ENCODE measurements at regions of chr2 and their contacts with region 1.

Region 1: DNA sequence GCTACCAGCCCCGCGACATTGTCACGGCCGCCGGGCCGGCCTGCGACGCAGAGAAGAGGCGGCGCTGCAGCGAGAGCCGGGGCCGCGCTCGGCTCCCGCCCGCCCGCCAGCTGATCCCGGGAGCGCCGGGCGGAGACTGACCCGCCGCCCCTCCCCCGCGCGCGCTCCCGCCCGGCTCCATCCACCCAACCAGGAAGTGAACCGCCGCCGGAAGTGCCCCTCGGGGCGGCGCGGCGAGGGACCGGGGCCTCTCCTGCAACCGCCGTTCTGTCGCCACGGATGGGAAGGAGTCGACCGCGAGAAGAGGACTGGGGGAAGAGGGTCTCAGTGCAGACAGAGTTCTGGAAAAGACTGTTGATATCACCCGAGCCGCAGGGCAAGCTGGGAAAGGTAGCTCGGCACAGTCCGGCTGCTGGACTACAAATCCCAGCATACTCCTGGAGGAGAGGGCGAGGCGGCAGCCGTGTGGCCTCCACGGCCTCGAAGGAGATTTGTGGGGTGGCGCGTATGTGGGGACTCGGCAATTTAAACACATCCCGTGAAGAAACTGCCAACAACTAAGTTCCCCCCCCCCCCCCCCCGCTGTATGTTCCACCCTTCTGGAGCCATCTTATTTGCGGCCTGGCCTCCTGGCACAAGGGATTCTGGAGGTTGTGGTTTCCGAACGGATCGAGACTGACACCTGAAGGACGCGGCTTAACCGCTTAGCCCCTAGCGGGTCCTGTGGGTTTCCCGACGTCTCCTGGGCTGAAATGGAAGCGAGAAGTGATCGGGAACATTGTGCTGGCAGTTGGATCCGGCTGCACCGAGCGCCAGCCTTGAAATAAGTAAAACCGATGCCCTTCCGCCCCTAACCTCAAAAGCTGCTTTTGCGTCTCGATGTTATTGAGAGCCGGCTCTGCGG is at the start of gene AAK1:
- DNase-seq: peak; percentile 79
- ATAC-seq: peak; percentile 85
- H3K4me3 ChIP-seq: peak within 1 kb of the TSS; percentile 90
- H3K27ac ChIP-seq: peak within 1 kb of the TSS; percentile 97
- H3K4me1 ChIP-seq: peaks cover 17% of the 10 kb centered on the region
- H3K27me3 ChIP-seq: no peaks in the 10 kb centered on the region
- CTCF ChIP-seq: no peak
- POLR2A ChIP-seq: peak; percentile 71
- RAD21 ChIP-seq: no peak
- total RNA-seq, gene AAK1: 26.5 and 34.7 TPM in 2 replicates

Region 2: DNA sequence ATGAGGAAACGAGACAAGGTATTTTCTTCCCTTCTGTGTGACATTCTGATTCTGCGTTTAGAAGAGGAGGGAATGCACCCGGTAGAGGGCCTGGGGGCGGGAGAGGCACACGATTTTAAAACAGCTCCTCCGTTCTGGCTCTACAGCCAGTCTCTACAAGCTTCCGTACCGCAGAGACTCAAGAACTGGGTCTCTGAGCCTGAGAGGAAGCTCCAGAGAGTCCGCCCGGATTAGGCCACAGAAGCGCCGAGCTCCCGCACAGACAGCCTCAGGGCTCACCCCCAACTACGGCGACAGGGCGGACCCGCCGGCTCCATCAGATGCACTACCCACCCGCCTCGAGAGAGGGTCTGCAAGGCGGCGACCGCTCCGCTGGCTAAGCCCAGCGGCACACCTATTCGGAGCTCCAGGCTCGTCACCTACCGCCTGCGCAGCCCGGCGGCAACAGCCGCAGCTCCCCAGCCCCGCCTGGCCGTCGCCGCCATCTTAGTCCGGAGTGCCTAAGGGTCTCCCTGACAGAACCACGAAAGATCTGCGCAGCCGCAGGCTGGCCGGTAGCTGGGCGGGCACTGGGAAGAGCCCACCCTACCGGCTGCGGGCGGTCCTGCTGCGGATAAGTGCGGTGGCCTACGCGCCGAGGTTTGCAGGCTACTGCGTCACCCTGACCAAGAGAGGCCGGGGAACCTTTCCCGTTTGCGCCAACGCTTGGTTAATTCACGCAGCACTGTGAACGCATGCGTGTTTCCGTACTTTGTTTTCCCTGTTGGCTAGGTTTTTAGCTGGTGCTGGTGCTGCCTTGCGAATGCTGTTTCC is 206.7 kb before region 1 on chr2 and contains the start of gene NFU1:
- CTCF ChIA-PET with region 1: no interaction called
- POLR2A ChIA-PET with region 1: no interaction called
- dilution Hi-C with region 1: no loop called
- in situ Hi-C with region 1: no loop called
- intact Hi-C with region 1: loop called (anchors 2 kb)
- DNase-seq: peak; percentile 97
- ATAC-seq: peak; percentile 99
- H3K4me3 ChIP-seq: peak within 1 kb of the TSS; percentile 59
- H3K27ac ChIP-seq: peak within 1 kb of the TSS; percentile 83
- H3K4me1 ChIP-seq: peaks cover 4% of the 10 kb centered on the region
- H3K27me3 ChIP-seq: no peaks in the 10 kb centered on the region
- CTCF ChIP-seq: peak; percentile 74
- POLR2A ChIP-seq: peak; percentile 88
- RAD21 ChIP-seq: peak; percentile 36
- total RNA-seq, gene NFU1: 24.0 and 40.0 TPM in 2 replicates

Region 3: DNA sequence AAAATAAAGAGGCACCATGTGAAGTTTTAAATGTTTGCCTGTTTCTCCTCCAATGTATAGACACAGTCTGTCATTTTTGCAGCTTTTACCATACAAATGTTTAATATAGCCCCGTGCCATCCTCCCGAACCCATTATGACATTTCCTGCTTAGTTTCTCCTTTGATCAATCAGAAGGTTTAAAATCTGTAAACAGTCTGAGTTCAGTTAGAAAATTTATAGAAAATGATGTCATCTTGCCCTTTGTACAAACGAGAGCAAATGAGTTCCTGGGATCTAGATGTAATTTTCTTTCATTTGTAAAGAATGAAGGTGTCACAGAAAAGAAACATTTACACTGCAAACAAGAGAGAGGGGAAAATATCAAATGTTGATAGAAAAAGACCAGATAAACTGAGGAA is 143.9 kb before region 1 on chr2:
- CTCF ChIA-PET with region 1: no interaction called
- POLR2A ChIA-PET with region 1: no interaction called
- dilution Hi-C with region 1: no loop called
- in situ Hi-C with region 1: no loop called
- intact Hi-C with region 1: loop called (anchors 5 kb)
- DNase-seq: peak; percentile 21
- ATAC-seq: peak; percentile 21; the same call in 1 of the 2 replicates
- H3K4me3 ChIP-seq: no peak overlapping the region
- H3K27ac ChIP-seq: no peak overlapping the region; the same call in 1 of the 2 replicates
- H3K4me1 ChIP-seq: 0 out of 2 replicates have a peak, but pooled peaks cover 2% of the 10 kb centered on the region
- H3K27me3 ChIP-seq: no peaks in the 10 kb centered on the region
- CTCF ChIP-seq: no peak
- POLR2A ChIP-seq: no peak
- RAD21 ChIP-seq: no peak

Region 4: GRCh38 chr2:69565431-69565839 is 78.4 kb before region 1 on chr2:
- CTCF ChIA-PET with region 1: interaction called, 3 read pairs
- POLR2A ChIA-PET with region 1: interaction called, 3 read pairs
- dilution Hi-C with region 1: no loop called
- in situ Hi-C with region 1: no loop called
- intact Hi-C with region 1: loop called (anchors 5 kb)
- DNase-seq: no peak
- ATAC-seq: no peak
- H3K4me3 ChIP-seq: no peak overlapping the region
- H3K27ac ChIP-seq: no peak overlapping the region
- H3K4me1 ChIP-seq: peaks cover 30% of the 10 kb centered on the region
- H3K27me3 ChIP-seq: no peaks in the 10 kb centered on the region
- CTCF ChIP-seq: peak; percentile 47
- POLR2A ChIP-seq: no peak
- RAD21 ChIP-seq: peak; percentile 18; the same call in 1 of the 2 replicates

Region 5: DNA sequence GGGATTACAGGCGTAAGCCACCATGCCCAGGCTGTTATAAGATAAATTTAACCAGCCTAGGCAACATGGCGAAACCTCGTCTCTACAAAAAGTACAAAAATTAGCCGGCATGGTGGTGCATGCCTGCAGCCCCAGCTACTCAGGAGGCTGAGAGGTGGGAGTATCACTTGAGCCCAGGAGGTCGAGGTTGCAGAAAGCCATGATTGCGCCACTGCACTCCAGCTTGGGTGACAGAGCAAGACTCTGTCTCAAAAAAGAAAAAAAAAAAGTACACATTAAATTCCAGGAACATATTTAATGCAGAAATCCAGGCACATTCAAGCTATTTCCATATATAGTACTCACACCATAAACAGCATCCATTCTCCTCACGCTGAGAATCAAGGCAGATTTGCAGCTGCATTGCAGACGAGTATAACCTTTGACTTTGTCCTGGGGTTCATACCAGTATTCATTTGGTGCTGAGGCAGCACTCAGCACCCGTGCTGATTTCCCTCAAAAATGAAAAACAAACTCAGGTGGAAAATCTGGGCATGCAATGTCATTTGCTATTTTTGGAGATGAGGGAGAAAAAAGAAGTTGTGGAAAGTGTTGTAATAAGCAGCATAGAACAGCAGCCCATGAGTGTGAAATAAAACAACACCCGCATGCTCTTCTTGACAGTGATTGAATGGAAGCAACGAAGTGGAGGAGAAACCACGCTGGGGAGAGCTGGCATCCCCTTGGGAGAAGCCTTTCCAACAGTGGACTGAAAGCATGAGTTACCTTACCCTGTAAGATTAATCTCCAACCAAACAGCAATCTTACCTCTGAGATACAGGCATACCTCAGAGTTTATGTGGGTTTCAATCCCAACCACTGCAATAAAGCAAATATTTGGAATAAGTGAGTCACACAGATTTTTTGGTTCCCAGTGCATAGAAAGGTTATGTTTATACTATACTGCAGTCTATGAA is 51.3 kb after region 1 on chr2:
- CTCF ChIA-PET with region 1: no interaction called
- POLR2A ChIA-PET with region 1: no interaction called
- dilution Hi-C with region 1: no loop called
- in situ Hi-C with region 1: no loop called
- intact Hi-C with region 1: loop called (anchors 5 kb)
- DNase-seq: peak; percentile 91
- ATAC-seq: peak; percentile 82
- H3K4me3 ChIP-seq: peak overlapping the region; percentile 13; the same call in 1 of the 2 replicates
- H3K27ac ChIP-seq: peak overlapping the region; percentile 62
- H3K4me1 ChIP-seq: peaks cover 26% of the 10 kb centered on the region
- H3K27me3 ChIP-seq: no peaks in the 10 kb centered on the region
- CTCF ChIP-seq: no peak
- POLR2A ChIP-seq: no peak
- RAD21 ChIP-seq: no peak

Region 6: GRCh38 chr2:69716555-69717114 is 72.8 kb after region 1 on chr2:
- CTCF ChIA-PET with region 1: no interaction called
- POLR2A ChIA-PET with region 1: no interaction called
- dilution Hi-C with region 1: no loop called
- in situ Hi-C with region 1: no loop called
- intact Hi-C with region 1: loop called (anchors 2 kb)
- DNase-seq: peak; percentile 71
- ATAC-seq: peak; percentile 60
- H3K4me3 ChIP-seq: no peak overlapping the region
- H3K27ac ChIP-seq: no peak overlapping the region
- H3K4me1 ChIP-seq: 0 out of 2 replicates have a peak, but pooled peaks cover 3% of the 10 kb centered on the region
- H3K27me3 ChIP-seq: no peaks in the 10 kb centered on the region
- CTCF ChIP-seq: 0 out of 2 replicates have a peak, but pooled peaks have one; percentile 10
- POLR2A ChIP-seq: no peak
- RAD21 ChIP-seq: peak; percentile 14